ENCODE measurements at regions of chr12 and their contacts with region 1.

Region 1: GRCh38 chr12:124767066-124767821 is 96.4 kb downstream of the SCARB1 start:
- DNase-seq: peak; percentile 83
- H3K4me3 ChIP-seq: no peak overlapping the region
- H3K27ac ChIP-seq: no peak overlapping the region
- H3K4me1 ChIP-seq: peaks cover 5% of the 10 kb centered on the region
- H3K27me3 ChIP-seq: no peaks in the 10 kb centered on the region
- CTCF ChIP-seq: peak; percentile 100

Region 2: GRCh38 chr12:124036674-124037109 is 730.6 kb before region 1 on chr12:
- intact Hi-C with region 1: loop called (anchors 2 kb)
- DNase-seq: peak; percentile 32
- H3K4me3 ChIP-seq: no peak overlapping the region
- H3K27ac ChIP-seq: no peak overlapping the region
- H3K4me1 ChIP-seq: no peaks in the 10 kb centered on the region
- H3K27me3 ChIP-seq: no peaks in the 10 kb centered on the region
- CTCF ChIP-seq: peak; percentile 95

Region 3: DNA sequence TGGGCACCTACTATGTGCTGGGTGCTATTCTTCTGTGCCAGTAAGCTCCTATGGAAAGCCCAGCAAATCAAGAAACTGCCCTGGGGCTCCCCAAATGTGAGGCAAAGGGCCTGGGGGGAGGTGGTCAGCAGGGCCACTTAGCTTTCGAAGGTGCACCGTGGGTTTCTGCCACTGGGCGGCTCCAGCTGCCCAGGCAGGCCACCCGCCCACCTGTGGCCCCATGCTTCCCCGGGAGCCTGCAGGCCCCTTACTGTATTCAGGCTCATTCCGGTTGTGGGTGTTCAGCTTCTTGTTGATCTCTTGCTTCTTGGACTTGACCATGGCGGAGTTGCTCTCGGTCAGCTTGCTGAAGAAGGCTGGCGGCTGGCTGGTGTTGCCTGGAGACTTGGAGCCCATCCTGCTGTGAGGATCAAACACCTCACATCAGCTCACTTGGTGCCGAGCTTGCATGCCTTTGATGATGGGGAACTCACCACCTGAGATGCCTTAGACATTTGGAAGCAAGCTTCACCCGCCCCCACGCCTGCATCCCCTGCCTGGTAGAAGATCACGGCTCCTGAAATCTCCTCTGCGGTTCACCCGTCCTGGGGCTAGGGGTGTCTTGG is 435.1 kb before region 1 on chr12:
- intact Hi-C with region 1: loop called (anchors 5 kb)
- DNase-seq: no peak
- H3K4me3 ChIP-seq: no peak overlapping the region
- H3K27ac ChIP-seq: no peak overlapping the region
- H3K4me1 ChIP-seq: no peaks in the 10 kb centered on the region
- H3K27me3 ChIP-seq: no peaks in the 10 kb centered on the region
- CTCF ChIP-seq: no peak

Region 4: GRCh38 chr12:124567661-124568373 is 199.4 kb before region 1 on chr12:
- intact Hi-C with region 1: loop called (anchors 2 kb)
- DNase-seq: peak; percentile 93
- H3K4me3 ChIP-seq: peak overlapping the region; percentile 51
- H3K27ac ChIP-seq: peak overlapping the region; percentile 69
- H3K4me1 ChIP-seq: peaks cover 5% of the 10 kb centered on the region
- H3K27me3 ChIP-seq: no peaks in the 10 kb centered on the region
- CTCF ChIP-seq: no peak

Region 5: GRCh38 chr12:124655698-124656516 is 111.3 kb before region 1 on chr12:
- intact Hi-C with region 1: no loop called
- DNase-seq: peak; percentile 66
- H3K4me3 ChIP-seq: no peak overlapping the region
- H3K27ac ChIP-seq: peak overlapping the region; percentile 77
- H3K4me1 ChIP-seq: no peaks in the 10 kb centered on the region
- H3K27me3 ChIP-seq: no peaks in the 10 kb centered on the region
- CTCF ChIP-seq: no peak